Endothelial cell of umbilical vein (primary cell): ENCODE measurements at regions of chr17 and their contacts with region 1.

Region 1: GRCh38 chr17:75515496-75516254 is at the start of gene CASKIN2:
- DNase-seq: peak; percentile 92
- H3K4me3 ChIP-seq: peak within 1 kb of the TSS; percentile 57 to 72 (median 70)
- H3K27ac ChIP-seq: peak within 1 kb of the TSS; percentile 59
- H3K4me1 ChIP-seq: peaks cover 46% of the 10 kb centered on the region
- H3K27me3 ChIP-seq: no peaks in the 10 kb centered on the region
- CTCF ChIP-seq: peak; percentile 100
- POLR2A ChIP-seq: no peak
- total RNA-seq, gene CASKIN2: 34.6 and 37.6 TPM in 2 replicates

Region 2: GRCh38 chr17:75046582-75047289 is 468.9 kb before region 1 on chr17 and contains the starts of genes ATP5PD and KCTD2:
- CTCF ChIA-PET with region 1: no interaction called
- POLR2A ChIA-PET with region 1: no interaction called
- dilution Hi-C with region 1: no loop called
- intact Hi-C with region 1: loop called (anchors 10 kb)
- DNase-seq: peak; percentile 98
- H3K4me3 ChIP-seq: peak within 1 kb of the TSS; percentile 58 to 93 (median 67)
- H3K27ac ChIP-seq: peak within 1 kb of the TSS; percentile 19
- H3K4me1 ChIP-seq: peaks cover 13% of the 10 kb centered on the region
- H3K27me3 ChIP-seq: no peaks in the 10 kb centered on the region
- CTCF ChIP-seq: no peak
- POLR2A ChIP-seq: peak; percentile 93
- total RNA-seq, gene ATP5PD: 200 and 202 TPM in 2 replicates
- total RNA-seq, gene KCTD2: 20.6 and 23.2 TPM in 2 replicates

Region 3: DNA sequence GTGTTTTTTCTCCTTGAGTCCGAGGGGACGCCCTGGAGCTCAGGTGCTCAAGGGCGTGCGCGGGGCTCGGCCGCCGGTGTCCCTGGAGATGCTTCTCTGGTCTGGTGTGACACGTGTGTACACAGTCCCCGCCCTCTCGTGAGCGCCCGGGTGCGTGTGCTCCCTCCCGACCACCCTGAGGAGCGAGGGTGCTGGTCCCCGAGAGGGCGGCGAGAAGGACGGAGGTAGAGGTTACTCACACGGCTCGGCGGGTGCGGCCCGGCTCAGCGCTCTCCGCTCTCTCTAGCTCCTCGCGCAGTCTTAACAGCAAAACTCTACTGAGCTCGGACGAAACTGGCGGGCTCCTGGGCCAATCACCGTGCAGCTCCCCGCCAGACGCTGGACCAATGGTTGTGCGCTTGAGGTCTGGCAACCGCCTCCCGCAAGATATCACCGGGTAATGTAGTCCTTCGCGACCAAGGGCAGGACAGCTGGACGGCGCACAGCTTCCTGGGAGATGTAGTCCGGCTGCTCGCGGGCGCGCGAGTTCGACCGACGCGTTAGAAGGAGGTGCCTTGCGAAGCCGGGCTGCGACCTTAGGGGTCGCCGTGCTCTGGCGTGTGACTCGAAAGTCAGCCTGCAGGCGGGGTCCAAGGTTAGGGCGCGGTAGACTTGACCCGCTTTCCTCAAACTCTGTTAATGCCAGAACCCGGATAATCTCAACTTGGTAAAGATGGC is 226.4 kb before region 1 on chr17 and contains the start of gene SLC25A19:
- CTCF ChIA-PET with region 1: interaction called, 7 read pairs
- POLR2A ChIA-PET with region 1: no interaction called
- dilution Hi-C with region 1: no loop called
- intact Hi-C with region 1: loop called (anchors 1 kb)
- DNase-seq: peak; percentile 100
- H3K4me3 ChIP-seq: peak within 1 kb of the TSS; percentile 66 to 85 (median 75)
- H3K27ac ChIP-seq: peak within 1 kb of the TSS; percentile 86
- H3K4me1 ChIP-seq: peaks cover 8% of the 10 kb centered on the region
- H3K27me3 ChIP-seq: no peaks in the 10 kb centered on the region
- CTCF ChIP-seq: no peak
- POLR2A ChIP-seq: peak; percentile 9
- total RNA-seq, gene SLC25A19: 16.8 and 20.9 TPM in 2 replicates

Region 4: DNA sequence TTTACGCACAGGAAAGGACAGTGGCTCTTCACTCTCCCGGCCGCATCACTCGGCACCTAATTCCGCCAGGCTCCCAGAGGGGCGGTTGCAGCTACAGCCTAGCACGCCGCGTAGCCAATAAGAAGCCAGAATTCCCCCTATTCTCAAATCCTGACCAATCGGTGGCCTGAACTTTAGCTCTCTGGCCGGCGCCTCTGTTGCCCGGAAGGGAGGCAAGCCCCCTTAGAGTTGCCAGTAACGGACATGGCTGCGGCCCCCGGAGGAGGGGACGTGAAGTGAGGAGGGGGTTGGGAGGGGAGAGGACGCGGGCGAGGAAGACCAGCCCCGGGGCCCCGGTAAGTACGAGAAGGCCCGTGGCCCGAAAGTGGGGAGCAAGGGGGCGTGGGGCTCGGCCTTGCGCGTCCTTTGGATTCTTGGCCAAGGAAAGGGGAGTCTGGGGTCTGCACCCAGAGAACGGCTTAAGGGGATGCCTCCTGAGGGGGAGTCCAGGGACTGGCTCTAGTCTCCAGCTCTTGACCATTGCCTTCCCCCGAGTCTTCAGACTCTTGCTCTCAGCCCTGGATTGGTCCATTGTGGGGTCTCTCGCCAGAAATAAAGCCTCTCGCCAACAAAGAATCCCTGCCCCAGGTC is 59.1 kb before region 1 on chr17 and contains the start of gene TMEM94:
- CTCF ChIA-PET with region 1: interaction called, 5 read pairs
- POLR2A ChIA-PET with region 1: no interaction called
- dilution Hi-C with region 1: no loop called
- intact Hi-C with region 1: loop called (anchors 2 kb)
- DNase-seq: peak; percentile 97
- H3K4me3 ChIP-seq: peak within 1 kb of the TSS; percentile 70 to 87 (median 74)
- H3K27ac ChIP-seq: peak within 1 kb of the TSS; percentile 48
- H3K4me1 ChIP-seq: peaks cover 13% of the 10 kb centered on the region
- H3K27me3 ChIP-seq: no peaks in the 10 kb centered on the region
- CTCF ChIP-seq: no peak
- POLR2A ChIP-seq: peak; percentile 53
- total RNA-seq, gene TMEM94: 68.4 and 69.2 TPM in 2 replicates

Region 5: GRCh38 chr17:75589012-75589918 is 73.6 kb after region 1 on chr17:
- CTCF ChIA-PET with region 1: interaction called, 6 read pairs
- POLR2A ChIA-PET with region 1: no interaction called
- dilution Hi-C with region 1: no loop called
- intact Hi-C with region 1: loop called (anchors 1 kb)
- DNase-seq: peak; percentile 74
- H3K4me3 ChIP-seq: peak overlapping the region in 2 of 3 experiments; percentile 48 to 55
- H3K27ac ChIP-seq: peak overlapping the region; percentile 68
- H3K4me1 ChIP-seq: peaks cover 3% of the 10 kb centered on the region
- H3K27me3 ChIP-seq: no peaks in the 10 kb centered on the region
- CTCF ChIP-seq: peak; percentile 38 to 47
- POLR2A ChIP-seq: peak; percentile 42